Ovary (tissue), 10 donors: ENCODE measurements at regions of chr7 and their contacts with region 1.

Region 1: GRCh38 chr7:139359366-139360209 is at the start of gene LUC7L2:
- DNase-seq: peak; percentile 99 to 100 (median 100)
- H3K4me3 ChIP-seq: peak within 1 kb of the TSS; percentile 97
- H3K27ac ChIP-seq: peak within 1 kb of the TSS; percentile 93 to 100
- H3K4me1 ChIP-seq: peaks cover 5% of the 10 kb centered on the region
- H3K27me3 ChIP-seq: no peaks in the 10 kb centered on the region
- CTCF ChIP-seq: peak in 2 of 3 donors; percentile 28 to 31
- EP300 ChIP-seq: no peak
- POLR2A ChIP-seq: peak; percentile 88
- total RNA-seq, gene LUC7L2: 58.9 to 113 (median 96.5) TPM

Region 2: GRCh38 chr7:139023076-139023475 is 336.5 kb before region 1 on chr7:
- intact Hi-C with region 1: no loop called
- DNase-seq: no peak
- H3K4me3 ChIP-seq: no peak overlapping the region
- H3K27ac ChIP-seq: no peak overlapping the region
- H3K4me1 ChIP-seq: peaks cover 3% of the 10 kb centered on the region
- H3K27me3 ChIP-seq: no peaks in the 10 kb centered on the region
- CTCF ChIP-seq: no peak
- EP300 ChIP-seq: no peak
- POLR2A ChIP-seq: no peak

Region 3: DNA sequence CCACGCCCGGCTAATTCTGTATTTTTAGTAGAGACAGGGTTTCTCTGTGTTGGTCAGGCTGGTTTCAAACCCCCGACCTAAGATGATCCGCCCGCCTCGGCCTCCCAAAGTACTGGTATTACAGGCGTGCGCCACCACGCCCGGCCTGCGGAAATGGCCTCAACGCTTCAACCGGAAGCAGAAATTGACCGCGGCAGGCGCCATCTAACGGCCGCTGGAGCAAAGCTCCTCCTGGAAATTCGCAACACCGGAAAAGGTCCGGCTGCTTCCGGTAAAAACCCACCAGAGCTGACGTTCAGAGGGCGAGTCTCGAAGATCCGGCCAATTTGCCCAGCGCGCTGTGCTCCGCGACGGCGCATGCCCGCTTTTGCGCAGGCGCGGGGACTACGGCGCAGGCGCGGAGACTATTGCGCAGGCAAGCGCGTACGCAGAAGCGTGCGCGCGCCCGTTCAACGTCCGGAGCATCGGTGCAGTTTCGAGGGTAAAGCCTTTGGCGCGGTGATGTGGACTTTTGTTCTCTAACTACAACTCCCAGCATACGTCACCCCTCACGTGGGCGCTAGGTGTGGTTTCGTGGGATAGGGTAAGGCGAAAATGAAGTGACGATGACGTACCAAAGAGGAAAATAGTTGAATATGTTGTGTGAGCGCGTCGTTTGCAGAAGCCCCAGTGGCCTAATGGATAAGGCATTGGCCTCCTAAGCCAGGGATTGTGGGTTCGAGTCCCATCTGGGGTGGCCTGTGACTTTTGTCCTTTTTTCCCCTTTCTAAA is 19.4 kb before region 1 on chr7:
- intact Hi-C with region 1: loop called in 2 of 4 experiments (anchors 1 kb)
- DNase-seq: peak; percentile 97 to 99 (median 98)
- H3K4me3 ChIP-seq: peak overlapping the region; percentile 69
- H3K27ac ChIP-seq: peak overlapping the region; percentile 98 to 100
- H3K4me1 ChIP-seq: no peaks in the 10 kb centered on the region
- H3K27me3 ChIP-seq: no peaks in the 10 kb centered on the region
- CTCF ChIP-seq: peak; percentile 62 to 89 (median 85)
- EP300 ChIP-seq: peak; percentile 72
- POLR2A ChIP-seq: peak; percentile 60